Activated B cell treated with CpG ODN at 0.5 μM for 24 hours (primary cell): ENCODE measurements at regions of chr7 and their contacts with region 1.

Region 1: DNA sequence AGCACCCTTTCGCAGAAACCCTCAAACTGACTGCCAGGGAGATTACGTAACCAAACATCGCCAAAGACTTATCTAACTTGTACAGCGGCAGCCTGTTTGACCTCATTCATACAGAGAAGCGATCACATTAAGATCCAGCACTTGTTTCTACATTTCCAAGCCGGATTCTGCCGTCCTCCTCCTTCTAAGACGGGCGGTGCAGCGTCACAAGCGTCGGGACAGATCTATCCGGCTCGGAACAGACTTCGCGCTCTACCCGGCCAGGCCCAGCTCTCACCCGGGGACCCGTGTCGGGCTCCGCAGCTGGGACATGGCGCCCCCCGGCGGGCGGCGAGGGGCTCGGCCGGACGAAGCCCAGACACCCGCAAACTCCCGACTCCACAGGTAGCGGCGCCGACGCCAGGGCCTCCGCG is 373 bp downstream of the H2AZ2 start:
- DNase-seq: peak; percentile 90
- ATAC-seq: peak; percentile 65
- H3K4me3 Mint-ChIP-seq: peak overlapping the region; percentile 96
- H3K27ac Mint-ChIP-seq: peak overlapping the region; percentile 97
- H3K4me1 Mint-ChIP-seq: peaks cover 33% of the 10 kb centered on the region
- H3K27me3 Mint-ChIP-seq: no peaks in the 10 kb centered on the region
- CTCF ChIP-seq: no peak

Region 2: DNA sequence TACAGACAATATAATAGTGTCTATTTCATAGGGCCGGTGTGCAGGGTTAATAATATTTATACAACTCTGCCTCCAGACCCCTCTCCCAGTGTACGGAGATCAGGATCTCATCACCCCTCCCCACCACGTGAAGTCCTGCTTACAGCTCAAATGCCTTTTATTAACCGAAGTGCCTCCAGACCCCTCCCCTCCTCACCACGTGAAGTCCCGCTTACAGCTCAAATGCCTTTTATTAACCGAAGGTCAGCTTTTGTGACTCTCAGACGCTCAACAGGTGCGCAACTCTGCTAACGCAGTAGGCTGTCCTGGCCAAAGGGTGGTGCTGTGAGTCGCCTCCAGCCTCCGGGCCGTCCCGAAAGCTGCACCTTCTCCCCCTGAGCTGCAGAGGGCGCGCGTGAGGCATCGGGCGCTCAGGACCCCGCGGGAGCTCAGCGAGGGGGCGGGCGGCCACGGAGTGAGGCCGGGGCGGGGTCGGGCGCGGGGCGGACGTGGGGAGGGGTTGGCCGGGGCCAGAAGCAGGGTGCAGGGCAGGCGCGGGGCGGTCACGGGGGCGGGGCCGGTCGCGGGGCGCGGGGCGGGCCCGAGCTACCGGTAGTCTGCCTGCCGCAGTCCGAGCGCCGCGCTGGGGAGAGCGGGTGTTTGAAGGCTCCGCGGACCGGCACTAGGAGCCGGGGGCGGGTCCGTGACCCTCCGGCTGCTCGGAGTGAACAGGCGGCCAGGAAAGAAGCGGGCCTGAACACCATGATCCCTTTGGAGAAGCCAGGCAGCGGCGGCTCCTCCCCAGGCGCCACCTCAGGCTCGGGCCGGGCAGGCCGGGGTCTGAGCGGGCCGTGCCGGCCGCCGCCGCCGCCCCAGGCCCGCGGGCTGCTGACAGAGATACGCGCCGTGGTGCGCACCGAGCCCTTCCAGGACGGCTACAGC is 1264.8 kb before region 1 on chr7 and contains the start of gene STK17A:
- CTCF ChIA-PET with region 1: no interaction called
- POLR2A ChIA-PET with region 1: no interaction called
- intact Hi-C with region 1: loop called (anchors 5 kb)
- DNase-seq: peak; percentile 94
- ATAC-seq: peak; percentile 84
- H3K4me3 Mint-ChIP-seq: peak within 1 kb of the TSS; percentile 92
- H3K27ac Mint-ChIP-seq: peak within 1 kb of the TSS; percentile 97
- H3K4me1 Mint-ChIP-seq: peaks cover 41% of the 10 kb centered on the region
- H3K27me3 Mint-ChIP-seq: no peaks in the 10 kb centered on the region
- CTCF ChIP-seq: peak; percentile 44
- total RNA-seq, gene STK17A: 67.1 and 68.6 TPM in 2 replicates

Region 3: GRCh38 chr7:44565097-44565794 is 282.3 kb before region 1 on chr7:
- CTCF ChIA-PET with region 1: interaction called, 10 read pairs
- POLR2A ChIA-PET with region 1: interaction called, 5 read pairs
- intact Hi-C with region 1: no loop called
- DNase-seq: peak; percentile 63
- ATAC-seq: peak; percentile 98
- H3K4me3 Mint-ChIP-seq: no peak overlapping the region
- H3K27ac Mint-ChIP-seq: peak overlapping the region; percentile 50
- H3K4me1 Mint-ChIP-seq: no peaks in the 10 kb centered on the region
- H3K27me3 Mint-ChIP-seq: no peaks in the 10 kb centered on the region
- CTCF ChIP-seq: peak; percentile 55

Region 4: GRCh38 chr7:44606450-44607254 is 240.9 kb before region 1 on chr7 and contains the start of gene OGDH:
- CTCF ChIA-PET with region 1: interaction called, 10 read pairs
- POLR2A ChIA-PET with region 1: interaction called, 34 read pairs
- intact Hi-C with region 1: loop called (anchors 1 kb)
- DNase-seq: peak; percentile 100
- ATAC-seq: peak; percentile 94
- H3K4me3 Mint-ChIP-seq: peak within 1 kb of the TSS; percentile 98
- H3K27ac Mint-ChIP-seq: peak within 1 kb of the TSS; percentile 98
- H3K4me1 Mint-ChIP-seq: peaks cover 45% of the 10 kb centered on the region
- H3K27me3 Mint-ChIP-seq: no peaks in the 10 kb centered on the region
- CTCF ChIP-seq: no peak
- total RNA-seq, gene OGDH: 79.5 and 81.7 TPM in 2 replicates

Region 5: DNA sequence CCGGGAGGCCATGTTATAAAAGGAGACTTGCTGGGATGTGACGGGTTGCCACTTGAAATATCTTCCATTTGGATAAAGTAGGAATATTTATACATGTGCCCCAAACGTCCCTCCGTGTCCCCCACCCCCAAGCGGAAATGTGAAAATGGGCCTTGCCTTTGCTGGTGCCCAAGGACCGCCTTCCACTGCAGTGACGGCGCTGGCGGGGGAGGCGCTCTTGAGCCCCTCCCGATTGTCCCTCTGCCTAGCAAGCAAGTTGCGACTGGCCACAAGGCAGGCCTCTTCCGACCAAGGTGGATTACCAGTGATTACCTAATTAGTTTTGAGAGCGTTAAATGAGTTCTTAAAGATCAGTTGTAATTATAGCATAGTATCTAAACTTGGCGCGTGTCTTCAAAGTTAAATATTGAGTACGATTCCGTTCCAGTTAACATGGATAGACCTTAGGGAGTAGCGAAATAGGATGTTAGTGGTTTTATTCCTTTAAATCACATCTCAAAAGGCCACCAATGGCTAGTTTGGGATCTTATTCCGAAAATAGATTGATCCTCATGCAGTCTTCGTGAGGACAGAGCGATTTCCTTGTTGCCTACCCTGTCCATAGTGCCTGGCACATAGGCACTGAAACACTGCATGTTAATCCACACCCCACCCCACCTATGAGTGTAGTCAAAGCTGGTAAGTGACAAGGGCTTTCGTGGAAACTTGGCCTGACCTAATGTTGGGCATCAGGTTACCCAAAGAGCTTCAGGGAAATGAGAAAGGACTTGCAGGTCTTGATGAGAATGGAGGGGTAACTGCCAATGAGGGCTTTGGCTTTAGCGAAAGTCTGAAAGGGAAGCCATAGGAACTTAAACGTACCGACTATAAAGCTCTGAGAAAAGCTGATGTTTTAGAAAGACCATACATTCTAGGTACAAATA is 49.9 kb before region 1 on chr7:
- CTCF ChIA-PET with region 1: interaction called, 13 read pairs
- POLR2A ChIA-PET with region 1: interaction called, 25 read pairs
- intact Hi-C with region 1: loop called (anchors 1 kb)
- DNase-seq: peak; percentile 70
- ATAC-seq: peak; percentile 56
- H3K4me3 Mint-ChIP-seq: peak overlapping the region; percentile 97
- H3K27ac Mint-ChIP-seq: peak overlapping the region; percentile 96
- H3K4me1 Mint-ChIP-seq: peaks cover 38% of the 10 kb centered on the region
- H3K27me3 Mint-ChIP-seq: no peaks in the 10 kb centered on the region
- CTCF ChIP-seq: no peak

Region 6: GRCh38 chr7:44867073-44867995 is 19.8 kb after region 1 on chr7:
- CTCF ChIA-PET with region 1: no interaction called
- POLR2A ChIA-PET with region 1: no interaction called
- intact Hi-C with region 1: no loop called
- DNase-seq: no peak
- ATAC-seq: no peak
- H3K4me3 Mint-ChIP-seq: no peak overlapping the region
- H3K27ac Mint-ChIP-seq: no peak overlapping the region
- H3K4me1 Mint-ChIP-seq: peaks cover 2% of the 10 kb centered on the region
- H3K27me3 Mint-ChIP-seq: peaks cover 4% of the 10 kb centered on the region
- CTCF ChIP-seq: no peak

Region 7: GRCh38 chr7:44986218-44987053 is 138.9 kb after region 1 on chr7:
- CTCF ChIA-PET with region 1: no interaction called
- POLR2A ChIA-PET with region 1: no interaction called
- intact Hi-C with region 1: loop called (anchors 1 kb)
- DNase-seq: peak; percentile 97
- ATAC-seq: peak; percentile 92
- H3K4me3 Mint-ChIP-seq: peak overlapping the region; percentile 98
- H3K27ac Mint-ChIP-seq: peak overlapping the region; percentile 98
- H3K4me1 Mint-ChIP-seq: peaks cover 58% of the 10 kb centered on the region
- H3K27me3 Mint-ChIP-seq: no peaks in the 10 kb centered on the region
- CTCF ChIP-seq: no peak

Region 8: GRCh38 chr7:45117383-45117981 is 270.0 kb after region 1 on chr7:
- CTCF ChIA-PET with region 1: no interaction called
- POLR2A ChIA-PET with region 1: no interaction called
- intact Hi-C with region 1: no loop called
- DNase-seq: no peak
- ATAC-seq: no peak
- H3K4me3 Mint-ChIP-seq: no peak overlapping the region
- H3K27ac Mint-ChIP-seq: no peak overlapping the region
- H3K4me1 Mint-ChIP-seq: peaks cover 6% of the 10 kb centered on the region
- H3K27me3 Mint-ChIP-seq: peaks cover 10% of the 10 kb centered on the region
- CTCF ChIP-seq: no peak